CD14-positive monocyte (primary cell): ENCODE measurements at regions of chr5 and their contacts with region 1.

Region 1: DNA sequence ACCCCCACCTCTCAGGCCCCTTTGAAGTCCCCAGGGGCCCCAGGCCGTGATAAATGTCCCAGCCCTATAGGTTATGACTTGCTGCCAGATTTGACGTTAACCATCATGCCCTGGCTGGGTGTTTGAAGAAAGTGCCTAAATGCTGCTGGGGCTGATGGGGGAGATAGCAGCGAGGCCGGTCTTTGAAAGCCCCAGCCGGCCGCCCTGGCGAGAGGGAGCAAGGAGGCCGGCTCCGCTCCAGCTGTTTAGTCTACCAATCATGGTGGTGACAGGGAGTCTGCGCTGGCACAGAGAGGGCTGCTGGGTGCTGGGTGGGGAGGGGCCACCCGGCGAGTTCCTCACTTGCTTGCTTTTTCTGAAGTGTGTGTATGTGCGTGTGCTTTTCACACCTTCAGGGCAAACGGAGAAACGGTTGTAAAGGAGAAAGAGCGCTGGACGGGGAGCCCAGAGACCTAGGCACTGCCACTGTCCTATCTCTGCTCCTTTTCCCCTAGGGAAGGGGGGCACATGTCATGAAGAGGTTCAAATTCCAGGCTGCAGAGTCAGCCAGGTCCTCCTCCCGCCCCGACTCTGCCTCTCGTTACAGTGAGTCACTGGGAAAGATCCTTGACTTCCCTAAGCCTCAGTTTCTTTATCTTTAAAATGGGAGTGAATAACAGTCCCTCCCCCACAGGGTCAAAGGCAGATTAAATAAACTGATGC is 126.1 kb upstream of the HAND1 start:
- DNase-seq: no peak
- H3K4me3 ChIP-seq: no peak overlapping the region
- H3K4me3 Mint-ChIP-seq: peak overlapping the region in 1 of 2 donors; percentile 46
- H3K27ac ChIP-seq: no peak overlapping the region
- H3K27ac Mint-ChIP-seq: no peak overlapping the region
- H3K4me1 ChIP-seq: no peaks in the 10 kb centered on the region
- H3K4me1 Mint-ChIP-seq: peaks cover 2% of the 10 kb centered on the region
- H3K27me3 ChIP-seq: peaks cover 2 to 28% of the 10 kb centered on the region in 2 donors
- H3K27me3 Mint-ChIP-seq: peaks cover 26 to 56% (median 42%) of the 10 kb centered on the region in 3 donors
- CTCF ChIP-seq: no peak

Region 2: DNA sequence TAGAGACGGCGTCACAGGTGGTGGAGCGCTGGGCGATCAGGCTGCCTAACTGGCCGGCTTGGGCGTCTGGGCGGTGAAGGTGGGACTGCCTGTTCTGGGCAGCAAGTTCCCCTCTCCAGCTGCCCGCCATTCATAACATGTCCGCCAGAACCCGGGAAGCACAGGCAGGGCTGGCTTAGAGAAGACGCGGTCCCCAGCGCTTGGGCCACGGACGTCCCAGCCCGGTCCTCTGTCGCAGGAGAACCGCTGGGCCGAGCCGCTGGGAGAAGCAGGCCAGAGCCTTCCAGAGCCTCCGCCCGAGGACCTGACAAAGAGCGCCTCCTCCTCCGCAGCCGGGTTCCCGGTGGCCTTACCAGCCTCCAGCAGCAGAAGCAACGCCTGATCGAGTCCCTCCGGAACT is 110.9 kb before region 1 on chr5:
- intact Hi-C with region 1: loop called in 1 of 2 experiments (anchors 10 kb)
- DNase-seq: no peak
- H3K4me3 ChIP-seq: no peak overlapping the region
- H3K4me3 Mint-ChIP-seq: peak overlapping the region in 1 of 2 donors; percentile 58
- H3K27ac ChIP-seq: no peak overlapping the region
- H3K27ac Mint-ChIP-seq: no peak overlapping the region
- H3K4me1 ChIP-seq: no peaks in the 10 kb centered on the region
- H3K4me1 Mint-ChIP-seq: no peaks in the 10 kb centered on the region
- H3K27me3 ChIP-seq: peaks cover 46 to 79% of the 10 kb centered on the region in 2 donors
- H3K27me3 Mint-ChIP-seq: peaks cover 40 to 79% (median 57%) of the 10 kb centered on the region in 3 donors
- CTCF ChIP-seq: no peak

Region 3: GRCh38 chr5:154520861-154521453 is 83.2 kb before region 1 on chr5:
- intact Hi-C with region 1: loop called in 1 of 2 experiments (anchors 10 kb)
- DNase-seq: peak in 1 of 3 donors; percentile 11
- H3K4me3 ChIP-seq: no peak overlapping the region
- H3K4me3 Mint-ChIP-seq: no peak overlapping the region
- H3K27ac ChIP-seq: no peak overlapping the region
- H3K27ac Mint-ChIP-seq: no peak overlapping the region
- H3K4me1 ChIP-seq: no peaks in the 10 kb centered on the region
- H3K4me1 Mint-ChIP-seq: peaks cover 3% of the 10 kb centered on the region
- H3K27me3 ChIP-seq: peaks cover 0 to 11% of the 10 kb centered on the region in 2 donors
- H3K27me3 Mint-ChIP-seq: peaks cover 19 to 32% (median 23%) of the 10 kb centered on the region in 3 donors
- CTCF ChIP-seq: peak; percentile 83